ENCODE measurements at regions of chr2 and their contacts with region 1.

Region 1: DNA sequence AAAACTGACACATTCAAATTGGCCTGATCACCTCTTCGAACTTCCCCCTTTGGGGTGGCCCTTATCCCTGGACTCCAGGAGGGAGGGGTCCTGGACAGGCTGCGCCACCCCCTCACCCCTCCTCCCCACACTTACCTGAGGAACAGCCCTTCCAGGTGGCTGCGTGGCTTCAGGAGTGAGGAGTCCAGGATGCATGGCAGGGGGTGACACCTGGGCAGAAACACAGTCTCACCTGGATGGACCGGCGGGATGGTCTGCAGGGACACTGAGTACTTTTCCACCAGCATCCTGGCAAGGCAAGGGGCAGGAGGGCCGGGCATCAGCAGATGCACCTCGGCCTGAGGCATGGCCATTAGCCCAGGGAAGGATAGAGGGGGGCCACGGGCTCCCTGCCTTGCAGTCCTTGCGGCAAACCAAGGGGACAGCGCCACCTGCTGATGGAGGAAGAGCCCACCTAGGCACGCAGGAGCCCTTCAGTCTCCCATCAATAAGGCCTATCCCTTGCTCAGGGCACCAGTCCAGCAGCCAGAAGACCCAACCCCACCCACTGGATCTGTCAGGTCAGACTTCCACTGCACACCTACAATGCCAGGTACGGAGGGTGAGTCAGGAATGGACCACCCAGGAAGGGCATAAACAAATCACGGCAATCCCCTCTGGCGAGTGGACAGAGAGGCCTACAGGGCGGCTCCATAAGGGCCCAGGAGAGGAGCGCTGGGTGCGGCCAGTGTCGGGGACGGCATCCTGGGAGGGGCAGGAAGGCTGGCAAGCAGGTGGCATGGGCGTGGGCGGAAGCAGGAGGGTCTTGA is 26.0 kb downstream of the FAM178B start:
- DNase-seq: peak; percentile 75 to 77 (median 76)
- H3K4me3 ChIP-seq: no peak overlapping the region
- H3K4me3 Mint-ChIP-seq: peak overlapping the region; percentile 49 to 78 (median 74)
- H3K27ac ChIP-seq: peak overlapping the region; percentile 58
- H3K27ac Mint-ChIP-seq: peak overlapping the region; percentile 91 to 99 (median 97)
- H3K4me1 ChIP-seq: peaks cover 58% of the 10 kb centered on the region
- H3K4me1 Mint-ChIP-seq: peaks cover 39 to 61% (median 50%) of the 10 kb centered on the region in 4 donors
- H3K27me3 ChIP-seq: no peaks in the 10 kb centered on the region
- H3K27me3 Mint-ChIP-seq: no peaks in the 10 kb centered on the region

Region 2: DNA sequence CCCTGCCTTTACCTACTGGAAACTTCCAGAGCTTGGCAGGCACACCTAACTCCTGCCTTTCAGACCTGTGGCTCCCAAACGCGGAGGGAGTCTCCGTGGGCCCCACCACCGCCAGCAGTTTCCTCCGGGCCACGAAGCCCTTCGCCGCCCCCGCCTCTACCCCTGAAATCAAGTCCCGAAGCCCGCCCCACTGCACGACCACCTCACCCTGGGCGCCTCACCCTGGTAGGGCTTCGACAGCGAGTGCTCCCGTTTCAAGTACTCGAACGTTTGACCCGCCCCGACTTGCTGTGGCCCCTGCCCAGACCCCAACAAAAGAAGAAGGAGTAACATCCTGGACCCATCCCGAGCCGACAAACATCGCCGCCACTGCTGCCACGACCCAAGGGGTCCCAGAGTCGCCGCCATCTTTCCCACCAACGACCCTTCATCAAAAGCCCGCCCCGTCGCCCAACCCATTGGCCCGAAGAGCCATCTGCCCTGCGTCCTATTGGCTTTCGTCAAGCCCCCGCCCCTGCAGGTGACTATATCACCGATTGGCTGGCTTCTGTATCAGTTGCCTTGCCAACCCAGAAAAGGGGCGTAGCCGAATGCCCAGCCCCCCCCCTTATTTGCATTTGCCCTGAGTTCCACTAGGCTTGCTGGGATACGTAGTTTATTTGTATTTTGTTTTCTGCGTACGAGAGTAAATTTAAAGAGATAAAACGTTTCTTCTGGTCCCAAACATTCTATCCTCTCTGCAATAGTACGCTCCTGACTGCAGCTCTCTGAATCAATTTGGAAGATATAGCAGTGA is 220.5 kb before region 1 on chr2 and contains the start of gene LMAN2L:
- CTCF ChIA-PET with region 1: no interaction called
- POLR2A ChIA-PET with region 1: interaction called, 3 read pairs
- intact Hi-C with region 1: loop called (anchors 5 kb)
- DNase-seq: peak; percentile 94 to 99 (median 98)
- H3K4me3 ChIP-seq: peak within 1 kb of the TSS; percentile 63 to 82
- H3K4me3 Mint-ChIP-seq: peak within 1 kb of the TSS; percentile 93 to 100 (median 98)
- H3K27ac ChIP-seq: peak within 1 kb of the TSS; percentile 75
- H3K27ac Mint-ChIP-seq: peak within 1 kb of the TSS; percentile 90 to 98 (median 97)
- H3K4me1 ChIP-seq: peaks cover 36% of the 10 kb centered on the region
- H3K4me1 Mint-ChIP-seq: peaks cover 24 to 53% (median 39%) of the 10 kb centered on the region in 4 donors
- H3K27me3 ChIP-seq: no peaks in the 10 kb centered on the region
- H3K27me3 Mint-ChIP-seq: no peaks in the 10 kb centered on the region
- total RNA-seq, gene LMAN2L: 10.1 to 12.6 TPM

Region 3: DNA sequence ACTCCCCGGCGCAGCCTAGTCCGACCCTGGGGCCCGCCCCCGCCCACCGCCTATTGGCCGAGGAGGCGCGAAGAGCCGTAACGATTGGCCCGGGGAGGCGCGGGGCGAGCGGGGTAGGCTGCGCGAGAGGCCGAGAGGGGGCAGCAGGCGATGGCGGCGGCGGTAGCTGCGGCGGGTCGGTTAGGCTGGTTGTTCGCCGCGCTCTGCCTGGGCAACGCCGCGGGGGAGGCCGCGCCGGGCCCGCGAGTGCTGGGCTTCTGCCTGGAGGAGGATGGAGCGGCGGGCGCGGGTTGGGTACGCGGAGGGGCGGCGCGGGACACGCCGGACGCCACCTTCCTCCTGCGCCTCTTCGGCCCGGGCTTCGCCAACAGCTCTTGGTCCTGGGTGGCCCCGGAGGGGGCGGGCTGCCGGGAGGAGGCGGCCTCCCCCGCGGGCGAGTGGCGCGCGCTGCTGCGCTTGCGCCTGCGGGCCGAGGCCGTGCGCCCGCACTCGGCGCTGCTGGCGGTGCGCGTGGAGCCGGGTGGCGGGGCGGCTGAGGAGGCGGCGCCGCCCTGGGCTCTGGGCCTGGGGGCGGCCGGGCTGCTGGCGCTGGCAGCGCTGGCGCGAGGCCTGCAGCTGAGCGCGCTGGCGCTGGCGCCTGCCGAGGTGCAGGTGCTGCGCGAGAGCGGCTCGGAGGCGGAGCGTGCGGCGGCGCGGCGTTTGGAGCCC is 144.1 kb before region 1 on chr2 and contains the start of gene CNNM3:
- CTCF ChIA-PET with region 1: interaction called, 4 read pairs
- POLR2A ChIA-PET with region 1: interaction called, 11 read pairs
- intact Hi-C with region 1: loop called (anchors 1 kb)
- DNase-seq: peak; percentile 93 to 97 (median 94)
- H3K4me3 ChIP-seq: peak within 1 kb of the TSS; percentile 82 to 83
- H3K4me3 Mint-ChIP-seq: peak within 1 kb of the TSS; percentile 93 to 97 (median 95)
- H3K27ac ChIP-seq: peak within 1 kb of the TSS; percentile 77
- H3K27ac Mint-ChIP-seq: peak within 1 kb of the TSS; percentile 74 to 96 (median 93)
- H3K4me1 ChIP-seq: peaks cover 57% of the 10 kb centered on the region
- H3K4me1 Mint-ChIP-seq: peaks cover 50 to 76% (median 61%) of the 10 kb centered on the region in 4 donors
- H3K27me3 ChIP-seq: no peaks in the 10 kb centered on the region
- H3K27me3 Mint-ChIP-seq: no peaks in the 10 kb centered on the region
- total RNA-seq, gene CNNM3: 55.1 to 57.4 TPM

Region 4: DNA sequence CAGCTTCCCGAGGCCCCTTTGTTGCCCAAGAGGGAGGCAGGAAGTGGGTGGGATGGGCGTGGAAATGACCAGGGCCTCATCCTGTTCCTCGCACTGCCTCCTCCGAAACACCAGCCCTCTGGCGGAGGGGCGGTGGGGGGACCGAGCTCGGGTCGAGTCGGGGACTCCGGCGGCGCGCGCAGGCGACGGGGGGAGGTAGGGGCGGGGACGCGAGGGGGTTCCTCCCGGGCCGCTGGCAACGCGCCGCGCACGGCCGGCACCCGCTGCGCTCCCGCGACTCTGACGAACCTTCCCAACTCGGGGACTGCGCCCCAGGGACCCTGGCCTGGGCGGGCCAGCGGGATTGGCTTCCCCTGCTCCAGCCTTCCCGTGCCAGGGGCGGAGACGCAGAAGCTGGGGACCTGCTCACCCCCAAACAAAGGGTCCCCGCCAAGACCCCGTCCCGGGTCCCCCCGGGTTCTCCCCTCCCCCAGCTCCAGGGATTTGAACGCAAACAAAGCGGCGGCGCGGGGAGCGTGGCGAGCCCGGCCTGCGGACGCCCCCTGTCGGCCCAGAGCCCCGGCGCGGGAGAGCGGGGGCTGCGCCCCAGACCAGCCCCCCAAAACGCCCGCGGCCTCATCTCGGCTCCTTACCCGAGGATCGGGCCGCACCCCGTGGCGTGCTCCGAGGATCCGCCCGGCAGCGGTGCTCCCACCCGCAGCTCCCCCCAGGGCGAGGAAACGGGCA is 91.6 kb before region 1 on chr2:
- CTCF ChIA-PET with region 1: interaction called, 624 read pairs
- POLR2A ChIA-PET with region 1: interaction called, 194 read pairs
- intact Hi-C with region 1: loop called (anchors 1 kb)
- DNase-seq: peak; percentile 50 to 72 (median 52)
- H3K4me3 ChIP-seq: peak overlapping the region; percentile 47 to 72
- H3K4me3 Mint-ChIP-seq: peak overlapping the region; percentile 69 to 91 (median 88)
- H3K27ac ChIP-seq: peak overlapping the region; percentile 68
- H3K27ac Mint-ChIP-seq: peak overlapping the region in 6 of 7 donors; percentile 79 to 94 (median 92)
- H3K4me1 ChIP-seq: peaks cover 39% of the 10 kb centered on the region
- H3K4me1 Mint-ChIP-seq: peaks cover 27 to 58% (median 42%) of the 10 kb centered on the region in 4 donors
- H3K27me3 ChIP-seq: no peaks in the 10 kb centered on the region
- H3K27me3 Mint-ChIP-seq: no peaks in the 10 kb centered on the region

Region 5: GRCh38 chr2:96992266-96992665 is 31.9 kb after region 1 on chr2:
- CTCF ChIA-PET with region 1: no interaction called
- POLR2A ChIA-PET with region 1: no interaction called
- intact Hi-C with region 1: no loop called
- DNase-seq: no peak
- H3K4me3 ChIP-seq: no peak overlapping the region
- H3K4me3 Mint-ChIP-seq: no peak overlapping the region
- H3K27ac ChIP-seq: no peak overlapping the region
- H3K27ac Mint-ChIP-seq: no peak overlapping the region
- H3K4me1 ChIP-seq: no peaks in the 10 kb centered on the region
- H3K4me1 Mint-ChIP-seq: no peaks in the 10 kb centered on the region
- H3K27me3 ChIP-seq: no peaks in the 10 kb centered on the region
- H3K27me3 Mint-ChIP-seq: peaks cover 1 to 3% of the 10 kb centered on the region in 2 donors

Region 6: DNA sequence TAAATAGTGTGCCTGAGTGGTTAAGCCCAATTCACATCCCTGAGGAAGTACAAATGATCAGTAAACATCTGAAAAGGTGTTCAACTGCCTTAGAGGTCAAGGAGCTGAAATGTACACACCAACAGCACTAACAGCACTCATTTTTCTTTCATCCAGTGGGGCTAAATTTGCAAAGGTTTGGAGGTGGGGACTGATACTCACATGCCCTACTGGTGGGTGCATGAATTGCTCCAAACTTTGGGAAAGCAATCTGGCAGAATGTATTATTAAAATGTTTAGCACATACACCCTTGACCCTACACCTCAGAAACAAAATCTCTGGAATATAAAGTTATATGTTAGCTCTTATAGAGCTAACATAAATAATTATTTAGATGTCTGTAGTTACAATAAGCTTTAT is 45.0 kb after region 1 on chr2:
- CTCF ChIA-PET with region 1: interaction called, 3 read pairs
- POLR2A ChIA-PET with region 1: no interaction called
- intact Hi-C with region 1: loop called (anchors 5 kb)
- DNase-seq: peak in 2 of 5 donors; percentile 2 to 3
- H3K4me3 ChIP-seq: no peak overlapping the region
- H3K4me3 Mint-ChIP-seq: no peak overlapping the region
- H3K27ac ChIP-seq: no peak overlapping the region
- H3K27ac Mint-ChIP-seq: no peak overlapping the region
- H3K4me1 ChIP-seq: no peaks in the 10 kb centered on the region
- H3K4me1 Mint-ChIP-seq: peaks cover 0 to 3% (median 0%) of the 10 kb centered on the region in 4 donors
- H3K27me3 ChIP-seq: no peaks in the 10 kb centered on the region
- H3K27me3 Mint-ChIP-seq: peaks cover 3% of the 10 kb centered on the region in 2 donors

Region 7: DNA sequence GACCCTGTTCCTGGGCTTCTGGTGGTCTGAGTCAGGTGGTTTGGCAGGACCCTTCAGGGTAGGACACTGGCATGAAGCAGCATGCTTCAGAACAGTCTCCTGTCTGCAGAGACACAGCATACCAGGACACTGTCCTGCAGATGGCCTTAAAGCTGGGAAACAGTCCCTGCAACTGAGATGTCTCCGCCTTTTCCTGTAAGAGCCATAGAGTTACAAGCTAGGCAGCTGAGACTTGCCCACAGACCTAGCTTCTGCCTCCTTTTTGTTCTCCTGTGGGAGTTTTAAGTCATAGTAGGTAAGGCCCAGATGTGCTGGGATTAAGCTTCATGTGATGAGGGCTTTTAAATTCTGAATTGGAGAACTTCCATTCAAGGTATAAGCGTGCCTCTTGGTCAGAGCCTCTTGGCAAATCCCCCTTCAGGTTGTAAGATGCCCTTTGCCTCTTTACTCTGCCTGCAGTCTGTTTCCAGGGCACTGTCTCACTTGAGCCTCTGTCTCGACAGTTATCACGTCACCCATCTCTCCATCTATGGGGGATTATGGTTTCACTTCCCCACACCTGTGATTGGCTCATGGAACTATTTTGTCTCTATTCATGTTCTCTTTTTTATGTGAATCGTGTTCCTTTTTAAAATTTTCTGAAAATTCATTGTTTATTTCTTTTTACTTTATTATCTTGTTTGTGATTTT is 1596.1 kb after region 1 on chr2:
- CTCF ChIA-PET with region 1: no interaction called
- POLR2A ChIA-PET with region 1: no interaction called
- intact Hi-C with region 1: no loop called
- DNase-seq: no peak
- H3K4me3 ChIP-seq: no peak overlapping the region
- H3K4me3 Mint-ChIP-seq: no peak overlapping the region
- H3K27ac ChIP-seq: no peak overlapping the region
- H3K27ac Mint-ChIP-seq: peak overlapping the region in 5 of 7 donors; percentile 32 to 68 (median 35)
- H3K4me1 ChIP-seq: no peaks in the 10 kb centered on the region
- H3K4me1 Mint-ChIP-seq: peaks cover 7 to 31% (median 22%) of the 10 kb centered on the region in 4 donors
- H3K27me3 ChIP-seq: no peaks in the 10 kb centered on the region
- H3K27me3 Mint-ChIP-seq: no peaks in the 10 kb centered on the region

Measured in CD4-positive, alpha-beta memory T cell (primary cell).